ENCODE measurements at regions of chr22 and their contacts with region 1.

Region 1: DNA sequence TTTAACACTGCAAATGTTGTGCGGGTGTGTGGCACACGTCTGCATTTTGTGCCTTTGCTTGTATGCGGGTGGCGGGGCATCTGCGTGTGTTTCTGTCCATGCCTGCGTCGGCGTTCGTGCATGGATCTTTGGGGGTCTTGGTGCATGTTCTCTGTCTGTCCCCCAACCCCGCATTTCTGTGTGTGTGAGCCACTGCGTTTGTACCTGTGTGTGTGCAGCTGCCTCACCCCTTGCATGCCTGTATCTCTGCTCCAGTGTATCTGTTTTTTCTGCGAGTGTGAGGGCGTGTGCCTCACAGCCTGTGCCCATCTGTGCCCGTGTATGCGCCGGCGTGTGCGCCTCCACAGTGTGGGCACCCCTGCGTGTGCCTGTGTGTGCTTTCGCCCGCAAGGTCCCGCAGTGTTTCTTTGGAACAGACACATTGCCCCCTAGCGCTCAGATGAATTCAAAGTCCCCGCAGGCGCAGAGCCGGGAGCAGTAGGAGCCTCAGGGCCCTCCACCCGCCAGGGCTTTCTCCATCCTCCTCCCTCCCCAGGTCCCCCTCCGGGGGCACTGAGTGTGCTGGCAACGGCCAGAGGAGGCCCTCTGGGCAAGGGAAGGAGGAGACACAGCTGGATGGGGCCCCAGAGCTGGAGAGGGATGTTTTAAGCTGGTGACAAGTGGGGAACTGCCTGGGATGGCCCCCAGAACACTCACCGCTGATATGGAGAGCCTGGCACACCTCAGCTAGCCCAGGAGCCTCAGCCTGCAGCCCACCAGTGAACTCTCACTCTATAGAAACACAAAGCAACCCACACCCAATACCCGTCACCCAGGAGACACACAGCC is 3.1 kb upstream of the MN1 start:
- DNase-seq: peak; percentile 19 to 55 (median 35)
- H3K4me3 ChIP-seq: no peak overlapping the region
- H3K4me3 Mint-ChIP-seq: peak overlapping the region in 1 of 2 donors; percentile 78
- H3K27ac ChIP-seq: no peak overlapping the region
- H3K27ac Mint-ChIP-seq: peak overlapping the region in 1 of 7 donors; percentile 2
- H3K4me1 ChIP-seq: peaks cover 13% of the 10 kb centered on the region in 2 donors
- H3K4me1 Mint-ChIP-seq: peaks cover 8% of the 10 kb centered on the region
- H3K27me3 ChIP-seq: peaks cover 15 to 39% of the 10 kb centered on the region in 2 donors
- H3K27me3 Mint-ChIP-seq: peaks cover 42 to 54% (median 46%) of the 10 kb centered on the region in 3 donors
- CTCF ChIP-seq: peak; percentile 43

Region 2: GRCh38 chr22:27405672-27406388 is 398.9 kb before region 1 on chr22:
- intact Hi-C with region 1: loop called (anchors 5 to 10 kb)
- DNase-seq: peak; percentile 0 to 8 (median 2)
- H3K4me3 ChIP-seq: no peak overlapping the region
- H3K4me3 Mint-ChIP-seq: no peak overlapping the region
- H3K27ac ChIP-seq: no peak overlapping the region
- H3K27ac Mint-ChIP-seq: peak overlapping the region in 1 of 7 donors; percentile 31
- H3K4me1 ChIP-seq: no peaks in the 10 kb centered on the region
- H3K4me1 Mint-ChIP-seq: no peaks in the 10 kb centered on the region
- H3K27me3 ChIP-seq: no peaks in the 10 kb centered on the region
- H3K27me3 Mint-ChIP-seq: peaks cover 3 to 11% (median 6%) of the 10 kb centered on the region in 3 donors
- CTCF ChIP-seq: peak; percentile 63

Region 3: GRCh38 chr22:27670701-27671412 is 133.8 kb before region 1 on chr22:
- intact Hi-C with region 1: loop called in 1 of 2 experiments (anchors 10 kb)
- DNase-seq: peak; percentile 29 to 47 (median 37)
- H3K4me3 ChIP-seq: no peak overlapping the region
- H3K4me3 Mint-ChIP-seq: no peak overlapping the region
- H3K27ac ChIP-seq: peak overlapping the region; percentile 0 to 61
- H3K27ac Mint-ChIP-seq: peak overlapping the region; percentile 58 to 97 (median 90)
- H3K4me1 ChIP-seq: peaks cover 37 to 38% of the 10 kb centered on the region in 2 donors
- H3K4me1 Mint-ChIP-seq: peaks cover 42% of the 10 kb centered on the region
- H3K27me3 ChIP-seq: no peaks in the 10 kb centered on the region
- H3K27me3 Mint-ChIP-seq: peaks cover 0 to 3% (median 1%) of the 10 kb centered on the region in 3 donors
- CTCF ChIP-seq: no peak

Region 4: DNA sequence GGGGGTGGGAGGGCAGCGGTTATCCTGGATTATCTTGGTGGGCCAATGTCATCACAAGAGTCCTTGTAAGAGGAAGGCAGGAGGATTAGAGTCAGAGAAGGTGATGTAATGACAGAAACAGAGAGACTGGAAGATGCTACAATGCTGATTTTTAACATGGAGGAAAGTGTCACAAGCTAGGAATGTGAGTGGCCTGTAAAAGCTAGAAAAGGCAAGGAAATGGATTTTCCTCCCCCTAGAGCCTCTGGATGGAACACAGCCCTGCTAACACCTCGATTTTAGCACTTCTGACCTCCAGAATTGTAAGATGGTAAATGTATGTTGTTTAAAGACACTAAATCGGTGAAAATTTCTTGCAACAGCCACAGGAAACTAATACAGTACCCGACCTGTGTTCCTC is 112.4 kb before region 1 on chr22:
- intact Hi-C with region 1: loop called in 1 of 2 experiments (anchors 10 kb)
- DNase-seq: no peak
- H3K4me3 ChIP-seq: no peak overlapping the region
- H3K4me3 Mint-ChIP-seq: no peak overlapping the region
- H3K27ac ChIP-seq: no peak overlapping the region
- H3K27ac Mint-ChIP-seq: no peak overlapping the region
- H3K4me1 ChIP-seq: no peaks in the 10 kb centered on the region
- H3K4me1 Mint-ChIP-seq: no peaks in the 10 kb centered on the region
- H3K27me3 ChIP-seq: no peaks in the 10 kb centered on the region
- H3K27me3 Mint-ChIP-seq: peaks cover 2 to 3% (median 2%) of the 10 kb centered on the region in 3 donors
- CTCF ChIP-seq: no peak

Region 5: GRCh38 chr22:27726697-27727449 is 77.8 kb before region 1 on chr22:
- intact Hi-C with region 1: loop called in 1 of 2 experiments (anchors 5 kb)
- DNase-seq: peak; percentile 84 to 93 (median 91)
- H3K4me3 ChIP-seq: no peak overlapping the region
- H3K4me3 Mint-ChIP-seq: peak overlapping the region in 1 of 2 donors; percentile 62
- H3K27ac ChIP-seq: peak overlapping the region; percentile 53 to 83
- H3K27ac Mint-ChIP-seq: peak overlapping the region; percentile 80 to 97 (median 94)
- H3K4me1 ChIP-seq: peaks cover 30 to 35% of the 10 kb centered on the region in 2 donors
- H3K4me1 Mint-ChIP-seq: peaks cover 38% of the 10 kb centered on the region
- H3K27me3 ChIP-seq: no peaks in the 10 kb centered on the region
- H3K27me3 Mint-ChIP-seq: peaks cover 0 to 8% (median 0%) of the 10 kb centered on the region in 3 donors
- CTCF ChIP-seq: no peak

Measured in CD14-positive monocyte (primary cell).